ENCODE measurements at regions of chr17 and their contacts with region 1.

Region 1: GRCh38 chr17:3907483-3908216 is 8.6 kb downstream of the P2RX1 start:
- DNase-seq: no peak
- H3K4me3 ChIP-seq: no peak overlapping the region
- H3K27ac ChIP-seq: no peak overlapping the region
- H3K4me1 ChIP-seq: peaks cover 0 to 12% (median 0%) of the 10 kb centered on the region in 3 donors
- H3K27me3 ChIP-seq: no peaks in the 10 kb centered on the region
- CTCF ChIP-seq: peak in 4 of 6 experiments; percentile 9 to 40 (median 28)
- POLR2A ChIP-seq: no peak

Region 2: DNA sequence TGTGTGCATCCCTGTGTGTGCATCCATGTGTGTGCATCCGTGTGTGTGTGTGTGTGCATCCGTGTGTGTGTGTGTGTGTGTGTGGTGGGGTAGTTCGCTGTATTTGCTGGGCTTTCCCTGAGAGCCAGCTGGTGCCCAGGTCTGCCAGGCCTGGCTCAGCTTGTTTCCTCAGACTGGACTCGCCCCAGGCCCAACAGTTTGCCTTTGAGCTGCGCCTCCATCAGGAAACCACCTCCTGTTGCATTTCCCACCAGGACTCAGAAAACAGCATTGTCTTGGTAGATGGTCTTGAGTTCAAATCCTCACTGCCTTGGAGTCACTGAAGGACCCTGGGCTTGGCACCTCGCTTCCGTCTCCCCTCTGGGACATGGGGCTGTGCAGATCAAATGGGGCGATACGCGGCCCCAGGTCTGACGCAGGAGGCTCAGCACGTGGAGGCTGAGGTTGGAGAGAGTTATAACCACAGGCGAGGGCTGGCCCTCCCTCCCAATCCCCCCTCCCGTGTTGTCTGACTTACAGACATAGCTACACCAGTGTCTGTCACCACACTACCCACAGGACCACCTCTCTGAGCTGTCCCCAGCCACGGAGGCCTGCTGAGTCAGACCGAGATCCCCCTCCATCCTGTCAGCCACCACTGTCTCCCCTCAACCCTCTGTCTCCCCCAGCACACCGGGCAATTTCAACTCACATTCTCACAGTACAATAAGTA is 111.4 kb before region 1 on chr17:
- intact Hi-C with region 1: no loop called
- DNase-seq: no peak
- H3K4me3 ChIP-seq: no peak overlapping the region
- H3K27ac ChIP-seq: no peak overlapping the region
- H3K4me1 ChIP-seq: peaks cover 0 to 23% (median 10%) of the 10 kb centered on the region in 3 donors
- H3K27me3 ChIP-seq: no peaks in the 10 kb centered on the region
- CTCF ChIP-seq: no peak
- POLR2A ChIP-seq: no peak

Region 3: GRCh38 chr17:3865176-3865575 is 42.5 kb before region 1 on chr17:
- intact Hi-C with region 1: loop called (anchors 5 kb)
- DNase-seq: no peak
- H3K4me3 ChIP-seq: no peak overlapping the region
- H3K27ac ChIP-seq: peak overlapping the region in 1 of 4 donors; percentile 3
- H3K4me1 ChIP-seq: peaks cover 0 to 10% (median 0%) of the 10 kb centered on the region in 3 donors
- H3K27me3 ChIP-seq: no peaks in the 10 kb centered on the region
- CTCF ChIP-seq: no peak
- POLR2A ChIP-seq: no peak

Region 4: GRCh38 chr17:4017377-4017776 is 109.7 kb after region 1 on chr17:
- intact Hi-C with region 1: no loop called
- DNase-seq: no peak
- H3K4me3 ChIP-seq: no peak overlapping the region
- H3K27ac ChIP-seq: no peak overlapping the region
- H3K4me1 ChIP-seq: no peaks in the 10 kb centered on the region
- H3K27me3 ChIP-seq: no peaks in the 10 kb centered on the region
- CTCF ChIP-seq: peak in 1 of 6 experiments; percentile 17
- POLR2A ChIP-seq: no peak

Region 5: GRCh38 chr17:4199818-4200402 is 292.3 kb after region 1 on chr17:
- intact Hi-C with region 1: no loop called
- DNase-seq: no peak
- H3K4me3 ChIP-seq: no peak overlapping the region
- H3K27ac ChIP-seq: no peak overlapping the region
- H3K4me1 ChIP-seq: peaks cover 0 to 12% (median 5%) of the 10 kb centered on the region in 3 donors
- H3K27me3 ChIP-seq: no peaks in the 10 kb centered on the region
- CTCF ChIP-seq: peak; percentile 27 to 70 (median 66)
- POLR2A ChIP-seq: no peak

Measured in esophagus squamous epithelium (tissue), 5 donors.